HEK293 (cell line): ENCODE measurements at regions of chr17 and their contacts with region 1.

Region 1: GRCh38 chr17:77429919-77430752 is 289.4 kb downstream of the SEC14L1 start:
- H3K4me3 ChIP-seq: no peak overlapping the region
- H3K27ac ChIP-seq: no peak overlapping the region
- H3K4me1 ChIP-seq: peaks cover 2% of the 10 kb centered on the region; the same call in 1 of the 2 replicates
- CTCF ChIP-seq: peak; percentile 55; the same call in 1 of the 2 replicates

Region 2: DNA sequence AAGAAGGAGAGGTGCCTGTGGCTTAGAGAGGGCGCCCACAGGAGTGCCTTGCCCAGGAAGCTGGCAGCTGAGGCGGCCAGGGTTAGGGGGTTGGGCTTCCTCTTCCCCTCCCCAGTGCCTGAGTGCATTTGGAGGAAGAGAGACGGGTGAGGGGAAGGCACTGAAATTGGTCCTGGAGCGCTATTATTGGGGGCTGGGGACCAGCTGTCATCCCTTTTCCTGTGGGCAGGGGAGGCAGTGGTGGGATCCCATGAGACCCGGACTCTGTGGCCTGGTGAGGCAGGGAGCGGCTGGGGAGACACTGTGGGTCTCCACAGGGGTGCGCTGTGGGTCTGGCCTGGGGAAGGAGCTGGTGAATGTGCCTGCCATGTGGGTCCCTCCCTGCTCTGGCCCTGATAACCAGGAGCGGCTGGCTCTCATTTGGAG is 29.7 kb before region 1 on chr17:
- CTCF ChIA-PET with region 1: interaction called, 13 read pairs
- POLR2A ChIA-PET with region 1: no interaction called
- H3K4me3 ChIP-seq: no peak overlapping the region
- H3K27ac ChIP-seq: no peak overlapping the region
- H3K4me1 ChIP-seq: no peaks in the 10 kb centered on the region
- CTCF ChIP-seq: peak; percentile 47; the same call in 1 of the 2 replicates

Region 3: DNA sequence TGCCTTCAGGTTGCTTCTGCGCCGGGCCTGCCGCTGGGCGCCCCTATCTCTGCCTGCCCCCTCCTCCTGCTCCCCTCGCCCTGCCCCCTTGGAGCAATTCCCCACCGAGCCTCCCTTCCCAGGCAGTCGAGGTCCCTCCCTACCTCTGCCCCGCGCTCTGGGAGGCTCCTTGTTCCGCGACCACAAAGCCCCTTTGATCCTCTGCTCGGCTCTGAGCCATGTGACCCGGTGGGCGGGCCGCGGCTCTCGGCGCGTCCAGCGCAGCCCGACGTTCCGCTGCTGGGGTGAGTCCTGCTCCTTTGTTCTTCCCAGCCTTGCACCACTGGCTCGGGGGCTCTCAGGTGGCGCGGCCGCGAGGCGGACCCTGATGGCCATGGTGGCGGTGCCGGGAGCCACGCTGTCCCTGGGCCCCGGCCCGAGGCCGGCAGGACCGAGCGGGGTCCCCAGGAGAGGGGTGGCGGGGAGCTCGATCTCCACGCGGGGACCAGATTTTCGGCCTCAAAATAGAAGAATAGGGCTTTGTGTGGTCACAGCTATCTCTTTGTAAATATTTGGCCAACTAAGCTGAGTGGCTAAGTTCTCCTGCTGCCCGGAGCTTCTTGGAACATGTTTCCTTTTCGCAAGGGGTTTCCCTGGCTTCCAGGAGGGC is 21.2 kb after region 1 on chr17:
- CTCF ChIA-PET with region 1: interaction called, 16 read pairs
- POLR2A ChIA-PET with region 1: interaction called, 3 read pairs
- H3K4me3 ChIP-seq: peak overlapping the region; percentile 39
- H3K27ac ChIP-seq: peak overlapping the region; percentile 63; the same call in 1 of the 2 replicates
- H3K4me1 ChIP-seq: peaks cover 10% of the 10 kb centered on the region
- CTCF ChIP-seq: no peak

Region 4: GRCh38 chr17:77494664-77495435 is 64.7 kb after region 1 on chr17:
- CTCF ChIA-PET with region 1: interaction called, 62 read pairs
- POLR2A ChIA-PET with region 1: interaction called, 3 read pairs
- H3K4me3 ChIP-seq: no peak overlapping the region
- H3K27ac ChIP-seq: no peak overlapping the region
- H3K4me1 ChIP-seq: no peaks in the 10 kb centered on the region
- CTCF ChIP-seq: peak; percentile 92

Region 5: DNA sequence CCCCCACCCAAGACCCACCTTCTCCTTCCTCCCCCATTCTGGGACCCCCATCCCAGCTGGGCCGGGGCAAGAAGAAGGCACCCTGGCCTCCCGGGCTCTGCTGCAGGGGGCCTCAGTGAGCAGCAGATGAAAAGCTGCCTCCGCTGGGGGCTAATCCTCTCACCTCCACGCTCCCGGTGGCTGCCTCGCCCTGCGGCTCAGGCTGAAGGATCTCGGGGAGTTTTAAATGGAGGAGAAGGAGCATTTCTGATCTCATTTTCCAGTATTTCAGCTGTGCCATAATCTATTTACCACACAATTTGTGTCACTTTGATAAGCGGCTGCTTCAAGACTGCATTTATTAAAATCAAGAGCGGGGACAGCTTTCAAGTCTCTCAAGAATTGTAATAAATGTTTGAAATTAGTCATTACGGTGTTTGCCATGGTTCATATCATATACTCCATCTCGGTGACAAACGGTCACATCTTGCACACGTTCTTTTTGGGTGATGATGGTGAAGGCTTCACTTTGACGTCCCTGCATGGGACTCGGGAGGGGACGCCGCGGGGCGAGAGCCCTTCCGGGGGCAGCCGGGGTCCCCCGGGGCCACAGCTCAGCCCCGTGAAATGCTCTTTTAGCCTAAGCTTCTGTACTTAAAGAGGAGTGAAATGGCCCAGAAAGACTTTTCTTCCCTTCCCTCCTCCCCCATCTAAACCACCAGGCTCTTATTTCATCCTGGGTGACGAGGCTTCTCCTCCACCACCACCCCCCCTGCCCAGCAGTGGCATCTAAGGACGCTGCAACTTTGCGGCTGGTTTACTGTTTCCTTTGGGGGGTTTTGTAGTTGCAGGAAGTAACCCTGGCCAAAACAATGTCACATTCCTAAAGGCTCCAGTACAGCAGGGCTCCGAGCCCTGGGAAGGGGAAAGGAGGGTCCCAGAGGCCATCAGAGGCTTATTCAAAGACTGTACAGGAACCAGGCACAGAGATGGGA is 215.2 kb after region 1 on chr17:
- CTCF ChIA-PET with region 1: no interaction called
- POLR2A ChIA-PET with region 1: no interaction called
- H3K4me3 ChIP-seq: no peak overlapping the region
- H3K27ac ChIP-seq: no peak overlapping the region
- H3K4me1 ChIP-seq: no peaks in the 10 kb centered on the region
- CTCF ChIP-seq: no peak